Panc1 (cell line): ENCODE measurements at regions of chr7 and their contacts with region 1.

Region 1: DNA sequence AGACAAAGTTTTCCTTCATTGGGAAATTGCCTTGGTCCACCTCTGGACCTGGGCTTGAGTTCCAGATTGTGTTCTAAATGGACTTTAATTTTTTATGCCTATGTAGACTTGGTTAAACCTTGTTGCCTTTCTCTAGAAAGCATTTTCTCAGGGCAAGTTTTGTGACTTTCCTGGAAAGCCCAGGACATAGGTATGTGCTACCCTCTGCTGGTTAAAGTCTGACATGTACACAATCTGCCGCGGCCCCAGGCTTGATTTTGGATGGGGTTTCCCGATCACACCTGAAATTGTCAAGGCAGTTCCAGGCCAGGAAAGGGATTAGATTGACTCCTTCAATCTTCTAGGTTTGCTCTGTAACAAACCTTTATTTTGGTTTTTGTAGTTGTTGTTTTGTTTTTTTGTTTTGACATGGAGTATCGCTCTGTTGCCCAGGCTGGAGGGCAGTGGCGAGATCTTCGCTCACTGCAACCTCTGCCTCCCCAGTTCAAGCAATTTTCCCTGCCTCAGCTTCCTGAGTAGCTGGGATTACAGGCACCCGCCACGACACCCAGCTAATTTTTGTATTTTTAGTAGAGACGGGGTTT is 14.1 kb upstream of the AKR1B10 start:
- DNase-seq: peak; percentile 58
- ATAC-seq: peak; percentile 77
- H3K4me3 ChIP-seq: no peak overlapping the region
- H3K27ac ChIP-seq: no peak overlapping the region
- H3K4me1 ChIP-seq: peaks cover 5% of the 10 kb centered on the region; the same call in 1 of the 2 replicates
- H3K27me3 ChIP-seq: peaks cover 2% of the 10 kb centered on the region; the same call in 1 of the 2 replicates
- CTCF ChIP-seq: peak; percentile 82

Region 2: GRCh38 chr7:134462337-134462925 is 50.8 kb before region 1 on chr7:
- CTCF ChIA-PET with region 1: no interaction called
- POLR2A ChIA-PET with region 1: no interaction called
- in situ Hi-C with region 1: no loop called
- intact Hi-C with region 1: loop called (anchors 2 kb)
- DNase-seq: no peak
- ATAC-seq: no peak
- H3K4me3 ChIP-seq: no peak overlapping the region
- H3K27ac ChIP-seq: no peak overlapping the region
- H3K4me1 ChIP-seq: peaks cover 6% of the 10 kb centered on the region; the same call in 1 of the 2 replicates
- H3K27me3 ChIP-seq: no peaks in the 10 kb centered on the region
- CTCF ChIP-seq: no peak

Region 3: DNA sequence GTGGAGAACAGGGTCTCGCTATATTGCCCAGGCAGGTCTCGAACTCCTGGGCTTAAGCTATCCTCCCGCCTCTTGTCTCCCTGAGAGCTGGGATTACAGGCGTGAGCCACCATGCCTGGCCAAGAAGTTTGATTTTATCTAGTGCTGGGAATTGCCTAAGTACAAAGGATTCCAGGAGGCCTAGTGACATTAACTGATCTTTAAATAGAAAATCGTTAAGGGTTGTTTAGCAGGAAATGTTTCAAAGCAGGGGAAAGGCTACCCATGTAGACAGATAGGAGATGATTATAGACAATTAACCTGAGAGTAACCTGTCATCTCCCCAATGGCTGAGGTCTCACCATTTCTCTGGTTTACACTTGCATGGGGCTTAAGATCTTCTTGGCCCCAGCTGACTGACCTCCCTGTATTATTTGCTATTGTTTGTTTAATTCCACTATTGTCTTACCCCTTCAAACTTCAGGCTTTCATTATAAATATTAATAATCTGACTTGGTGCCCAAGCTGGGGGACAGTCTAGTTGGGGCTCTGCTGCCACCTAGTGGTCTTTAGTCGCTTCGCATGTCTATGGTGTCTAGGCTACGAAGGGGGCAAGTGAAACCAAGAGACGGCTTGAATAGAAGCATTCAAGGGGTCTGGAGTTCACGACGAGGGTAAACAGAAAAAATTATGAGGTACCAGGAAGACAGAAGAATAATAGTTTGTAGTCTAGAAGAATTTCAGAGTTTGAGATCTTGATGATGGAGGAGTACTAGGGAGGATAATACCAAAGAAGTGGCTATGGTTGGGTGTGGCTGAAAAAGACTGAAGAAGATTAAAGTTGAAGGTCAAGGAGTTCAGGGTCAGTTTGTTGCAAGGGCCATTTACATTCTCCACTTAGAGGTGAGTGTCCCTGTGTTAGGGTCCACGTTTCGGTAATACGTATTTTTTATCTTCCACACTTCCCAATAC is 93.0 kb after region 1 on chr7:
- CTCF ChIA-PET with region 1: no interaction called
- POLR2A ChIA-PET with region 1: no interaction called
- in situ Hi-C with region 1: no loop called
- intact Hi-C with region 1: loop called (anchors 2 kb)
- DNase-seq: no peak
- ATAC-seq: peak; percentile 97
- H3K4me3 ChIP-seq: no peak overlapping the region
- H3K27ac ChIP-seq: no peak overlapping the region
- H3K4me1 ChIP-seq: no peaks in the 10 kb centered on the region
- H3K27me3 ChIP-seq: peaks cover 2% of the 10 kb centered on the region; the same call in 1 of the 2 replicates
- CTCF ChIP-seq: peak; percentile 94